ENCODE measurements at regions of chr13 and their contacts with region 1.

Region 1: GRCh38 chr13:102870677-102871415 is 25.0 kb downstream of the ERCC5 start:
- DNase-seq: peak; percentile 69
- ATAC-seq: peak; percentile 66
- H3K4me3 Mint-ChIP-seq: no peak overlapping the region
- H3K27ac Mint-ChIP-seq: no peak overlapping the region
- H3K4me1 Mint-ChIP-seq: peaks cover 40% of the 10 kb centered on the region
- H3K27me3 Mint-ChIP-seq: no peaks in the 10 kb centered on the region

Region 2: DNA sequence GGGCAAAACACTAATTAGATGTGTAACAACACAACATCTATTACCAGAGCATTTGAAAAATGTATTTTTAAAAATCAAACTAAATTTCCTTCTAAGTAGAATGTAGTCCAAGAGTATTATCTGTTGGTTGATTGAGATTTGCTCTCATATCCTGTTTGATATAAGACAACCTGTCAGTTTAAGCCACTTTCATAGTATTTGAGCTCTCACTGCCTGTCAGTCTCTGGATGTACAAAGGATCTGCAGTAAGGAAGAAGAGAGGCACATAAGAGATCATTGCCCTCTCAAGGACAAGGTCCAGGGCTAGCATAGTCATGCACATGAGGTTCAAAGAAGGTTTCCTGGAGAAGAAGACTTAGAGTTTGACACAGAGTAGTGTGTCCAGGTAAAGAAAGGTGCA is 526.4 kb before region 1 on chr13:
- CTCF ChIA-PET with region 1: no interaction called
- DNase-seq: no peak
- ATAC-seq: no peak
- H3K4me3 Mint-ChIP-seq: no peak overlapping the region
- H3K27ac Mint-ChIP-seq: no peak overlapping the region
- H3K4me1 Mint-ChIP-seq: no peaks in the 10 kb centered on the region
- H3K27me3 Mint-ChIP-seq: peaks cover 8% of the 10 kb centered on the region

Region 3: GRCh38 chr13:102580552-102581169 is 290.2 kb before region 1 on chr13:
- CTCF ChIA-PET with region 1: interaction called, 12 read pairs
- DNase-seq: no peak
- ATAC-seq: peak; percentile 80
- H3K4me3 Mint-ChIP-seq: no peak overlapping the region
- H3K27ac Mint-ChIP-seq: no peak overlapping the region
- H3K4me1 Mint-ChIP-seq: peaks cover 11% of the 10 kb centered on the region
- H3K27me3 Mint-ChIP-seq: peaks cover 8% of the 10 kb centered on the region

Region 4: GRCh38 chr13:102769679-102770078 is 101.2 kb before region 1 on chr13:
- CTCF ChIA-PET with region 1: no interaction called
- DNase-seq: no peak
- ATAC-seq: no peak
- H3K4me3 Mint-ChIP-seq: no peak overlapping the region
- H3K27ac Mint-ChIP-seq: peak overlapping the region; percentile 2
- H3K4me1 Mint-ChIP-seq: peaks cover 41% of the 10 kb centered on the region
- H3K27me3 Mint-ChIP-seq: no peaks in the 10 kb centered on the region

Region 5: GRCh38 chr13:102845630-102846260 is 25.1 kb before region 1 on chr13 and contains the start of gene ERCC5:
- CTCF ChIA-PET with region 1: interaction called, 15 read pairs
- DNase-seq: peak; percentile 97
- ATAC-seq: peak; percentile 88
- H3K4me3 Mint-ChIP-seq: peak within 1 kb of the TSS; percentile 99
- H3K27ac Mint-ChIP-seq: peak within 1 kb of the TSS; percentile 99
- H3K4me1 Mint-ChIP-seq: peaks cover 42% of the 10 kb centered on the region
- H3K27me3 Mint-ChIP-seq: no peaks in the 10 kb centered on the region
- total RNA-seq, gene ERCC5: 75.8 to 76.1 TPM

Region 6: DNA sequence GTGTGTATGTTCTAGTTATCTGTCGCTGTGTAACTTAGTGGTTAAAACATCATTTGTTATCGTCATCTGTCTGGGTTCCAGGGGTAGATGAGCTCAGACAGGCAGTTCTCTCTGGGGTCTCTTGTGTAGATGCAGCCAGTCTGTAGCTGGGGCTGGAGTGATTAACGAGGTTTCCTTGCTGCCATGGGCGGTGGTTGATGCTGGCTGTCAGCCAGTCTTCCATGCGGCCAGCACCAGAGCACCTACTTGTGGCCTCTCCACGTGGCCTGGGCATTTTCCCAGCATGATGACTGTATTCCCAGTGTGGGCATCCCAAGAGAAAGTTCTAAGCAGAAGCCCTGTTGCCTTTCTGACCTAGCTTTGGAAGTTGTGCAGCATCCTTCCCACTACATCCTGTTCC is 14.3 kb before region 1 on chr13:
- CTCF ChIA-PET with region 1: interaction called, 11 read pairs
- DNase-seq: no peak
- ATAC-seq: no peak
- H3K4me3 Mint-ChIP-seq: no peak overlapping the region
- H3K27ac Mint-ChIP-seq: no peak overlapping the region
- H3K4me1 Mint-ChIP-seq: peaks cover 28% of the 10 kb centered on the region
- H3K27me3 Mint-ChIP-seq: no peaks in the 10 kb centered on the region

Region 7: GRCh38 chr13:102914339-102914930 is 43.6 kb after region 1 on chr13:
- CTCF ChIA-PET with region 1: interaction called, 10 read pairs
- DNase-seq: no peak
- ATAC-seq: no peak
- H3K4me3 Mint-ChIP-seq: no peak overlapping the region
- H3K27ac Mint-ChIP-seq: no peak overlapping the region
- H3K4me1 Mint-ChIP-seq: no peaks in the 10 kb centered on the region
- H3K27me3 Mint-ChIP-seq: peaks cover 26% of the 10 kb centered on the region

Measured in activated CD8-positive, alpha-beta memory T cell treated with anti-CD3 and anti-CD28 coated beads, Interleukin-2, amount 10 ng/mL, durations not matched to agents 7 days and 5 days (primary cell).